ENCODE measurements at regions of chr2 and their contacts with region 1.

Region 1: DNA sequence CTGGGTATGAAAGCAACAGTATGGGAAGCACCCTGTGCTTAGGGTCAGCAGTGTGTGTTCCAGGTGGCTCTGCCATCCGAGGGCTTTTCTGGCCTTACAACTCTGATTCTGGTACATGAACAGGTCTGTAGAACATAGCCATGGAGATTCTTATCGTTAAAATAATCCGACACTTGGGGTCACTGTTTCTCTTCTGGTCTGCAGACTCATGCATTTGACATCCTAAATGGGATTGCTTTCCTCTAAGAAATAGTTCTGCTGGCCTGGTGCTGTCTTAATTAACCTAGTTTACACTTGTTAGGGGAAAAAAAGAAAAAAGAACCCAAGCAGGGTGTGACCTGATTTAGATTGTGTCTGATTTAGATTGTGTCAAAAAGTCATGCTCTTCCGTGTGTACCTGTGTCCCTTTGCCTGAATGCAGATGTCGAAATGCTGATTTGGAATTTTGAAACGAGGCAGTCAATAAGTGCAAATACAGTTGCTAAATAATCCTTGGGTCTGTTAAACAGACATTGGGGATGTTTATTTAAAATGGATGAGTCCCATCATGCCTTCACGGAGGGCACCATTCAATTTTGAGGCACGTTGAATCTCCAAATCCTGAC is 59.6 kb downstream of the TRPM8 start:
- DNase-seq: peak in 1 of 10 donors; percentile 36
- H3K4me3 ChIP-seq: no peak overlapping the region
- H3K27ac ChIP-seq: no peak overlapping the region
- H3K27me3 ChIP-seq: no peaks in the 10 kb centered on the region
- CTCF ChIP-seq: peak in 55 of 56 donors; percentile 15 to 75 (median 54)

Region 2: GRCh38 chr2:234500394-234501006 is 523.7 kb after region 1 on chr2:
- intact Hi-C with region 1: loop called (anchors 2 to 10 kb)
- DNase-seq: peak in 6 of 10 donors; percentile 22 to 64 (median 52)
- H3K4me3 ChIP-seq: no peak overlapping the region
- H3K27ac ChIP-seq: no peak overlapping the region
- H3K27me3 ChIP-seq: peaks cover 0 to 3% (median 0%) of the 10 kb centered on the region in 45 donors
- CTCF ChIP-seq: peak in 53 of 56 donors; percentile 25 to 78 (median 60)

Region 3: GRCh38 chr2:234544659-234545611 is 568.1 kb after region 1 on chr2:
- intact Hi-C with region 1: loop called (anchors 2 to 10 kb)
- DNase-seq: peak; percentile 50 to 78 (median 64)
- H3K4me3 ChIP-seq: peak overlapping the region in 4 of 59 donors; percentile 2 to 33 (median 12)
- H3K27ac ChIP-seq: no peak overlapping the region
- H3K27me3 ChIP-seq: peaks cover 0 to 12% (median 0%) of the 10 kb centered on the region in 45 donors
- CTCF ChIP-seq: peak; percentile 73 to 98 (median 94)

Region 4: GRCh38 chr2:235116885-235117492 is 1140.2 kb after region 1 on chr2:
- intact Hi-C with region 1: loop called (anchors 10 kb)
- DNase-seq: no peak
- H3K4me3 ChIP-seq: no peak overlapping the region
- H3K27ac ChIP-seq: no peak overlapping the region
- H3K27me3 ChIP-seq: peaks cover 0 to 5% (median 0%) of the 10 kb centered on the region in 45 donors
- CTCF ChIP-seq: peak; percentile 76 to 99 (median 89)

Measured in dorsolateral prefrontal cortex (tissue), 120 donors.